ENCODE measurements at regions of chr3 and their contacts with region 1.

Region 1: GRCh38 chr3:170869645-170870593 is at the start of gene RPL22L1:
- DNase-seq: peak; percentile 95
- H3K4me3 Mint-ChIP-seq: peak within 1 kb of the TSS; percentile 97
- H3K27ac Mint-ChIP-seq: peak within 1 kb of the TSS; percentile 98
- H3K4me1 Mint-ChIP-seq: peaks cover 22% of the 10 kb centered on the region
- H3K27me3 Mint-ChIP-seq: no peaks in the 10 kb centered on the region
- total RNA-seq, gene RPL22L1: 379 to 382 TPM

Region 2: GRCh38 chr3:170709046-170709445 is 160.9 kb before region 1 on chr3:
- CTCF ChIA-PET with region 1: no interaction called
- POLR2A ChIA-PET with region 1: no interaction called
- intact Hi-C with region 1: no loop called
- DNase-seq: no peak
- H3K4me3 Mint-ChIP-seq: no peak overlapping the region
- H3K27ac Mint-ChIP-seq: no peak overlapping the region
- H3K4me1 Mint-ChIP-seq: no peaks in the 10 kb centered on the region
- H3K27me3 Mint-ChIP-seq: peaks cover 29% of the 10 kb centered on the region

Region 3: DNA sequence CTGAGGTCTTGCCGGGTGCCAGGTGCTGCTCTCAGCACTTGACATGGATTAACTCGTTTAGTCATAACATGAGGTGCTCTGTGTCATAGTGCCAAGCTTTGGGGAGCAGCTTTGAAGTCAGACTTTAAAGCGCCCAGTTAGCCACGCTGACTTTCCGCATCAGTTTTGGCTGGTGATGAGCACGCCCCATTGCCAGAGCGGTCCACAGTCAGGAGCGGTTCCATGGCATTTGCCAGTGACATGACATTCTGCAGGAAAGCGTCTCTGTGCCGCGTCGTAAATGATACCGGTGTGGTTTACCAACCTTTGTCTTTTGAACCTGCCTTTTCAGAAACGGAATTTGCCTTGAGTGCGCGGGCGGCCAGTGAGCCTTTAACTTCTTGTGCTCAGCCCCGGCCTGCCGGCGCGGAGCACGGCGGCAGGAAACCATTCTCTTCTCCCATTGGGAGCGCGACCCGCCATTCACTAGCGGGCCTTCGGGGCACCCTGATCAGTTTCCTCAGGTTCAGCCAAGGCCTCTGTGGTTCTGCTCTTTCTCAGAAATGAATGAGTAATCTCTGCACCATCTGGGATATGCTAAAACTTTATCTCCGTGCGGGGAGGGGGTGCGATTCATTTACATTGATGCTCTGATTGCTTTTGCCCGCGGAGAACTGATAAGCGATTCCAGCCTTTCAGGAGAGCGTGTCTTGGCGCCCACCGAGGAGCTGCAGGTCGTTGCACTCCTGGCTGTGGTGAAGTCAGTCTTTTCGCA is 158.3 kb after region 1 on chr3:
- CTCF ChIA-PET with region 1: no interaction called
- POLR2A ChIA-PET with region 1: no interaction called
- intact Hi-C with region 1: loop called (anchors 5 kb)
- DNase-seq: peak; percentile 80
- H3K4me3 Mint-ChIP-seq: no peak overlapping the region
- H3K27ac Mint-ChIP-seq: no peak overlapping the region
- H3K4me1 Mint-ChIP-seq: no peaks in the 10 kb centered on the region
- H3K27me3 Mint-ChIP-seq: peaks cover 14% of the 10 kb centered on the region

Measured in activated CD4-positive, alpha-beta memory T cell treated with anti-CD3 and anti-CD28 coated beads for 36 hours (primary cell).